ENCODE measurements at regions of chr4 and their contacts with region 1.

Region 1: DNA sequence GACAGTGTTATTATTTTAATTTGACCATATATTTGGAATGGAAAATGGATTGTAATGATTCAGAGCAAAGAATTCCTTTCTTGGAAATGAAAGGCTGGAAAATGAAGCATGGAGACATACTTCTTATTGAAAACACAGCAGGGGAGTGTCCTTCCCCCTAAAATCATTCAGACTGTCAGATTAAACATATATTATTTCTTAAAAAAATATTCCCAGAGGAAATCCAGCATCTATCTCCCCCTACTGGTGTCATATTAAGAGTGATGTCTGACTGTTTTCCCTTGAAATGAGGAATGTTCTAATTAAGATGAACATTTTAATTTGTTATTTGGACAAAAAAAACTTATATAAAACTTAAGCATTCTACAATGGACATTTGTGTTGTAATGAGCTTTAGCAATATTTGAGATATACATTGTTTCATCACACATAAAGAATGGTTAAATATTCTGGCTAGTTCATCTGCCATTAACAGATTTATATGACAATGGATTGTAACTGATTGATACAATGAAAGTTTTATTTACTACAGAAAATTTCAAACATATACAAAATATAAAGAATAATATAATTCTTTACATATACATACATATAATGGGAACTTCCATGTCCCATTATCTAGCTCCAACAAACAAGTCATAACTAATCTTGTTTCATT is 264.6 kb downstream of the SPRY1 start:
- DNase-seq: no peak
- ATAC-seq: no peak

Region 2: GRCh38 chr4:123127218-123127617 is 534.0 kb before region 1 on chr4:
- intact Hi-C with region 1: loop called in 1 of 2 experiments (anchors 5 kb)
- DNase-seq: no peak
- ATAC-seq: peak in 1 of 2 donors; percentile 27

Region 3: DNA sequence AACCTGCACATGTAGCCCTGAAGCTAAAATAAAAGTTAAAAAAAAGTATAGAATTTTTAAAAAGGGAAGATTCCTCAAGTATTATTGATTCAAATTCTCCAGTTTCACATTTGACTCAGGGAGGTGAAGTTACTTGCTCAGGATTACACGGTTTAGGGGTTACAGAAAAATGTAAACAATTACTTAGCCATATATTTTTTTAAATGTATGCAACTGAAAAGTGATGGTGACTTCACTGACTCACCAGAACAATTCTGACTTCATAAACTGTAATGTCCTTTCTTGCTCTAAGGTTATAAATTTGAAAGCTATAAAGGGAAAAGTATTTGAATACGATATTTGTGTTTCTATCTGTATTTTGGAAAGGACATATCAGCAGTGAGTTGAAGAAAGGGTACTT is 106.6 kb after region 1 on chr4:
- intact Hi-C with region 1: no loop called
- DNase-seq: no peak
- ATAC-seq: no peak

Measured in left cardiac atrium (tissue), 4 donors.